AG04449 (cell line): ENCODE measurements at regions of chr14 and their contacts with region 1.

Region 1: GRCh38 chr14:49585803-49586672 is at the start of gene RPS29:
- DNase-seq: peak; percentile 94
- H3K4me3 ChIP-seq: peak within 1 kb of the TSS; percentile 84
- CTCF ChIP-seq: no peak

Region 2: DNA sequence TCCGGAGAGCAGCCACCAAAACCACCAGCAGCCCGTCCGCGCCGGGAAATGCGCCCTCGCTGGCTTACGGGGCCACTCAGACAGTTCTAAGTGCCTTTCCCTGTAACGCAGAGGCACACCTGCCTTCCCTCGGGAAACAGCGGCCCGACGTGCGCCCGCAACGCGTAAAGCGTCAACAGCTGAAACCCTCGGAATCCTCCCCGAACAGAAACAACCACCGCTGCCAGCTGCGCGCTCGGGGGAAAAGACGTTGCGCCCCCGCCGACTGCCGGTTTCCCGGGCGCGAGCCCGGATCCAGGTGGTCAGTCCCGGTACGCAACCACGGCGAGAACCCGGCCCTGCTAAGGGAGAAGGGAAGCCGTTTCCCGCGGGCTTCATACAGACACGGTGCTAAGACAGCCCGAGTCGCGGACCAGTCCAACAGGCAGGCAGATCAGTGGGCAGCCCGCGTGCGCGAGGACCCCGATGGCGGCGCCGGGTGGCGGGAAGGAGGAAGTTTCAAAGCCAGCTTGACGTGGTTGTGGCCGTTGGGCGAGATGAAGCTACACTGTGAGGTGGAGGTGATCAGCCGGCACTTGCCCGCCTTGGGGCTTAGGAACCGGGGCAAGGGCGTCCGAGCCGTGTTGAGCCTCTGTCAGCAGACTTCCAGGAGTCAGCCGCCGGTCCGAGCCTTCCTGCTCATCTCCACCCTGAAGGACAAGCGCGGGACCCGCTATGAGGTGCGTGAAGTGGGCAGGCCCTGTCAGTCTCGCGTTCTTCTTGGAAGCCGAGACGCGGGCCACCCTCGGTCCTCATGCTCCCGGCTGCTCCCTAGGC is 12.7 kb after region 1 on chr14 and contains the start of gene LRR1:
- CTCF ChIA-PET with region 1: interaction called, 14 read pairs
- POLR2A ChIA-PET with region 1: interaction called, 5 read pairs
- DNase-seq: no peak
- H3K4me3 ChIP-seq: peak within 1 kb of the TSS; percentile 96
- CTCF ChIP-seq: no peak

Region 3: DNA sequence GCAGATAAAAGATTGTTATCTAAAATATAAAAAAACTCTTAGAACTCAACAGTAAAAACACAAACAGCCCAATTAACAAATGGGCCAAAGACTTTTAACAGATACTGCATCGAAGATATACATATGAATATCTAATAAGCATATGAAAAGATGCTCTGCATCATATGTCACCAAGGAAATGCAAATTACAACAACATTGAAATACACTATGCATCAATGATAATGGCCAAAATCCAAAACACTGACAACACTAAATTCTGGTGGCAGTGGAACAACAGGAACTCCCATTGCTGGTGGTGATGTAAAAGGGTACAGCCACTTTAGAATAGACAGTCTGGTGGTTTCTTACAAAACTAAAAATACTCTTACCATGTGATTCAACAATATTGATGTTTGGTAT is 222.7 kb after region 1 on chr14:
- CTCF ChIA-PET with region 1: no interaction called
- POLR2A ChIA-PET with region 1: no interaction called
- DNase-seq: no peak
- H3K4me3 ChIP-seq: no peak overlapping the region
- CTCF ChIP-seq: no peak